HepG2 (cell line): ENCODE measurements at regions of chr12 and their contacts with region 1.

Region 1: GRCh38 chr12:25386831-25387731 is 136.4 kb upstream of the KRAS start:
- DNase-seq: peak; percentile 77
- ATAC-seq: peak; percentile 32
- H3K4me3 ChIP-seq: peak overlapping the region; percentile 58 to 75 (median 75)
- H3K27ac ChIP-seq: peak overlapping the region; percentile 87
- H3K4me1 ChIP-seq: peaks cover 34% of the 10 kb centered on the region
- H3K27me3 ChIP-seq: peaks cover 6 to 28% of the 10 kb centered on the region in 2 experiments
- CTCF ChIP-seq: peak; percentile 84
- EP300 ChIP-seq: no peak
- POLR2A ChIP-seq: peak in 1 of 2 experiments; percentile 31; a peak in 1 of 4 replicates
- RAD21 ChIP-seq: peak; percentile 76

Region 2: DNA sequence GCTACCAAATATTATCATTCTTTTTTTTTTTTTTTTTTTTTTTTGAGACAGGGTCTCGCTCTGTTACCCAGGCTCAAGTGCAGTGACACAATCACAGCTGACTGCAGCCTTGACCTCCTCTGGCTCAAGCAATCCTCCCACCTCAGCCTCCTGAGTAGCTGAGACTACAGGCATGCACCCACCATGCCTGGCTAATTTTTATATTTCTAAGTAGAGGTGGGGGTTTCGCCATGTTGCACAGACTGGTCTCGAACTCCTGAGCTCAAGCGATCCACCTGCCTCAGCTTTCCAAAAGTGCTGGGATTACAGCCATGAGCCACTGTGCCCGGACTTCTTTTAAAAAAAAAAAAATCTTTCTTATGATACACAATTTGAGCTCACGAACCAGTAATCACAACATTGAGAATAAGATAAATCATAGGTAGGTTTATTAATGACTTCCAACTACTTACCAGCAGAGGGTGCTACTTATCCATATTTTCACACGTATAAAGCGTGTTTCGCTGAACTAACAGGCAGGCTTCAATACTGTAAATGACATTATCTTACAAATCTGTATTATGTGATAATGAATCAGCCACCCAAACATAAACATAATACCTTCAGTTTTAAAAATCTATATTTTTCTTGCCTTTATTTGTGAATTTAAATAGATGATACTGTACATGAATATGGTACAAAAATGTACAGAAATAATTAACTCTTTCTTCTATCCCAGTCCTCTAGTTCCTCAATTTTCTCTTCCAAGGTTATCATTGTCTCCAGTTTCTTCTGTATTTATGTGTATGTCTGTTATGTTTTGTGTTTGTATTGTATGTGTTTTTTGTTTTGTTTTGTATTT is 395.7 kb before region 1 on chr12:
- CTCF ChIA-PET with region 1: interaction called, 7 read pairs
- POLR2A ChIA-PET with region 1: no interaction called
- in situ Hi-C with region 1: no loop called
- intact Hi-C with region 1: loop called (anchors 1 kb)
- DNase-seq: peak; percentile 45
- ATAC-seq: peak; percentile 82
- H3K4me3 ChIP-seq: no peak overlapping the region
- H3K27ac ChIP-seq: no peak overlapping the region
- H3K4me1 ChIP-seq: no peaks in the 10 kb centered on the region
- H3K27me3 ChIP-seq: no peaks in the 10 kb centered on the region; a peak in 1 of 5 replicates
- CTCF ChIP-seq: peak; percentile 70
- EP300 ChIP-seq: no peak
- POLR2A ChIP-seq: no peak
- RAD21 ChIP-seq: peak; percentile 53; the same call in 1 of the 2 replicates

Region 3: DNA sequence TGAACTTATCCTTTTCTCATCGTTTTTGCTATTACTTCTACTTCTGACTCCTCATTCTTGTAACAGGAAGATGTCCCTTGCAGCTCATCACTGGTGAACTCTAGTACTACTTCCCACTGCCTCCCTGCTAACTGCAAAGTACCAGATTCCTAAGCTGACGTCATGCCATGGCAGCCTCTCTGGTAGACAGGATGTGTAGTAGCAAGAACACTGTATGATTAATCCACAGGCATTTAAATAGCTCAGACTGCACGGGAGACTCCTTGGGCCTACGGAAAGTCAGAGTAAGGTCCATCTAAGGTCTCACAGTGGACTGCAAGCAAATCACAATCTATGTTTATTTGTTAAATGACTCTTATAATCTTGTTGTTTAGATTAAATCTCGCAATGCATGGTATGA is 235.6 kb before region 1 on chr12:
- CTCF ChIA-PET with region 1: no interaction called
- POLR2A ChIA-PET with region 1: no interaction called
- in situ Hi-C with region 1: no loop called
- intact Hi-C with region 1: loop called (anchors 1 kb)
- DNase-seq: no peak
- ATAC-seq: no peak
- H3K4me3 ChIP-seq: no peak overlapping the region
- H3K27ac ChIP-seq: no peak overlapping the region
- H3K4me1 ChIP-seq: peaks cover 5% of the 10 kb centered on the region; the same call in 1 of the 2 replicates
- H3K27me3 ChIP-seq: no peaks in the 10 kb centered on the region
- CTCF ChIP-seq: no peak
- EP300 ChIP-seq: no peak
- POLR2A ChIP-seq: no peak
- RAD21 ChIP-seq: no peak

Region 4: DNA sequence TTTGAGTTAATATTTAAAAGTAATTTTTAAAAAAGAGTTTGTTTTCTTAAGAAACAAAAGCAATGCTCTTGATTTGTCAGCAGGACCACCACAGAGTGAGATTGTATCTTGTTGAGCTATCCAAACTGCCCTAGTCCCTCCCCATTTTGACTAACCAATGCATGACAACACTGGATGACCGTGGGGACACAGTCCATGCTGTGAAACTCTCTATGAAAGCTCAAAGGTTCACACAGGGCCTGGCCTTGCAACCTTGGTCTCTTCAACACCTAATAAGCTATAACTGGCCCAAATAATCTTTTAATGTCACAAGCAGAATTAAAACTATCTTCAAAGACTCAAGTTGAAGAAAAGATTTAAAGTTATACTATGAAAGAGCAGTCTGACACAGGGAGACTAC is 178.5 kb before region 1 on chr12:
- CTCF ChIA-PET with region 1: no interaction called
- POLR2A ChIA-PET with region 1: no interaction called
- in situ Hi-C with region 1: no loop called
- intact Hi-C with region 1: loop called (anchors 1 kb)
- DNase-seq: peak; percentile 58
- ATAC-seq: peak; percentile 93
- H3K4me3 ChIP-seq: no peak overlapping the region
- H3K27ac ChIP-seq: no peak overlapping the region
- H3K4me1 ChIP-seq: peaks cover 5% of the 10 kb centered on the region; the same call in 1 of the 2 replicates
- H3K27me3 ChIP-seq: no peaks in the 10 kb centered on the region
- CTCF ChIP-seq: no peak
- EP300 ChIP-seq: no peak
- POLR2A ChIP-seq: no peak
- RAD21 ChIP-seq: no peak

Region 5: GRCh38 chr12:25241167-25242020 is 145.7 kb before region 1 on chr12:
- CTCF ChIA-PET with region 1: no interaction called
- POLR2A ChIA-PET with region 1: no interaction called
- in situ Hi-C with region 1: no loop called
- intact Hi-C with region 1: loop called (anchors 1 kb)
- DNase-seq: peak; percentile 24
- ATAC-seq: no peak
- H3K4me3 ChIP-seq: no peak overlapping the region
- H3K27ac ChIP-seq: no peak overlapping the region
- H3K4me1 ChIP-seq: no peaks in the 10 kb centered on the region
- H3K27me3 ChIP-seq: no peaks in the 10 kb centered on the region
- CTCF ChIP-seq: peak; percentile 51
- EP300 ChIP-seq: no peak
- POLR2A ChIP-seq: no peak
- RAD21 ChIP-seq: no peak

Region 6: GRCh38 chr12:25412735-25413134 is 25.7 kb after region 1 on chr12:
- CTCF ChIA-PET with region 1: no interaction called
- POLR2A ChIA-PET with region 1: no interaction called
- in situ Hi-C with region 1: no loop called
- intact Hi-C with region 1: no loop called
- DNase-seq: no peak
- ATAC-seq: no peak
- H3K4me3 ChIP-seq: no peak overlapping the region
- H3K27ac ChIP-seq: no peak overlapping the region
- H3K4me1 ChIP-seq: no peaks in the 10 kb centered on the region
- H3K27me3 ChIP-seq: no peaks in the 10 kb centered on the region
- CTCF ChIP-seq: no peak
- EP300 ChIP-seq: no peak
- POLR2A ChIP-seq: no peak
- RAD21 ChIP-seq: no peak

Region 7: DNA sequence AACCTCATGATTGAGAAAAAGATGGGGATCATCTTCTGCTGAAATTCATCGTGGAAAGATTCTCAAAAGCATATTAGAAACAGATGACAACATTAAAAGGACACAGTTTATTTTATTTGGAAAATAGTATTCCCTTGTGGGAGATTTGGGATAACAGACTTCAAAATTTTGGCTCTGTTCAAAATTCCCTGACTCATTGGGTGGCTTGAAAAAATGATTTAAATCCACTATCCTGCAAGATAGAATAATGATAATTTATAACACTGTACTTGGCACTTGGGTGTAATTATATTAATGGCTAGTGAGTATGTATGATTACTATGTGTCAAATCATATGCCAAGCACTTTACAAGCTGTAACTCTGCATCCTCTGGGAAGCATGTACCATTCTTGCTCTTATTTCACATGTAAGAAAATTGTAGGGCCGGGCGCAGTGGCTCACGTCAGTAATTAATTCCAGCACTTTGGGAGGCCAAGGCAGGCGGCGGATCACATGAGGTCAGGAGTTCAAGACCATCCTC is 37.2 kb after region 1 on chr12:
- CTCF ChIA-PET with region 1: no interaction called
- POLR2A ChIA-PET with region 1: no interaction called
- in situ Hi-C with region 1: no loop called
- intact Hi-C with region 1: no loop called
- DNase-seq: no peak
- ATAC-seq: no peak
- H3K4me3 ChIP-seq: no peak overlapping the region
- H3K27ac ChIP-seq: no peak overlapping the region
- H3K4me1 ChIP-seq: no peaks in the 10 kb centered on the region
- H3K27me3 ChIP-seq: no peaks in the 10 kb centered on the region
- CTCF ChIP-seq: no peak
- EP300 ChIP-seq: no peak
- POLR2A ChIP-seq: no peak
- RAD21 ChIP-seq: no peak